Right ventricle myocardium superior (tissue), 1 donor: ENCODE measurements at regions of chr4 and their contacts with region 1.

Region 1: GRCh38 chr4:138182838-138183426 is 59.2 kb downstream of the SLC7A11 start:
- DNase-seq: no peak
- ATAC-seq: peak; percentile 69

Region 2: DNA sequence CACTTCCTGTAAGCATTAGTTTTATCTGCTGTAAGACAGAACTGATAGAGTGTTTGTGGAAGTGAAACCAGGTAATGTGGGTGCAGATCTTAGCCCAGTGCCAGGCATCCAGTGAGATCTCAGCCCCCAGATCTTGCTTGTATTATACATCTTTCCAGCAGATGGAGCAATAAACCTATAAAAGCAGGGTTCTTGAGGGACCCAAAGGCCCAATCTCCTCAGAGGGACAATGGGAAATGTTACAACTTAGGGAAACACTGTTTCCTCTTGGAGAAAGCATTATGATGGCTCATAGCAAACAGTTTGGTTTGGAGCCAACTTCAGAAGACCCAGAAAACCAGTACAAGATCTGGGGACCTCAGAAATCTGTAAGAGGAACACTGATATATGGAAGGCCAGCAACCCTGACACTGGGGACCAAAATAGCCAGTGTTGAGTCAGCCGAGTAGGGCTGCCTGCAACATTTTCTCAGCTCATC is 147.1 kb before region 1 on chr4:
- intact Hi-C with region 1: loop called (anchors 5 kb)
- DNase-seq: no peak
- ATAC-seq: peak; percentile 95

Region 3: DNA sequence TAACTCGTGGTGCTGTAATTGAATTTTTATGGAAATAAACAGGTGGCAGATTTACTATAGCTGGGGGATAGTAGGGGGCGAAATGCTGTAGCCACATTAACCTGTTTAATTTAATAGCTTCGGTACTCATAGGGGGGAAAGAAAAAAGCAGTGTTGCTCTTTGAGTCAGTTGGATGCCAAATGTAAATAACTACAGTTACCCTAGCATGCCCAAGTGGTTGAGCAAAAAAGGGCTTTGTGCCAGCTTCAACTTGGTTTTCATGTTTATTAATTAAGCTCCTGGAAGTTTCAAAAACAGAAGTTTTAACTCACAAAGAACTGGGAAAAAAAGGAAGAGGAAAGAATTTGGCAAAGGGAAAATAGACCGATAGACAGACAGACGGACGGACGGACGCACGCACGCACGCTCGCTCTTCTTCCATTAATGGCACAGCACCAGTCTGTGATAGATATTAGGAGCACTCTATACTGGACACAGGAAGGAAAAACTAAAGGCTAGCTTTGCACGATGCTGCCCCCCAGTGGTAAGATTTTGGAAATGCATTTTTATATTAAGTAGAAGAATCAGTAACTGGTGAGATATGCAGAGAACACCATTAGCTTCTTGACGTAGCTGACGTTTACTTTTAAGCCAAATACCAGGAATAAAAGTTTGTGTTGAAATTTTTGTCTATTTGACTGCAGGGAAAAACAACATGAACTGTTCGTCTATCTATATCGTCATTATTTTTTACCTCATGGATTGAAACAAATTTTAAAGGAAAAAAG is 92.6 kb before region 1 on chr4:
- intact Hi-C with region 1: loop called (anchors 5 kb)
- DNase-seq: peak; percentile 46
- ATAC-seq: peak; percentile 84

Region 4: DNA sequence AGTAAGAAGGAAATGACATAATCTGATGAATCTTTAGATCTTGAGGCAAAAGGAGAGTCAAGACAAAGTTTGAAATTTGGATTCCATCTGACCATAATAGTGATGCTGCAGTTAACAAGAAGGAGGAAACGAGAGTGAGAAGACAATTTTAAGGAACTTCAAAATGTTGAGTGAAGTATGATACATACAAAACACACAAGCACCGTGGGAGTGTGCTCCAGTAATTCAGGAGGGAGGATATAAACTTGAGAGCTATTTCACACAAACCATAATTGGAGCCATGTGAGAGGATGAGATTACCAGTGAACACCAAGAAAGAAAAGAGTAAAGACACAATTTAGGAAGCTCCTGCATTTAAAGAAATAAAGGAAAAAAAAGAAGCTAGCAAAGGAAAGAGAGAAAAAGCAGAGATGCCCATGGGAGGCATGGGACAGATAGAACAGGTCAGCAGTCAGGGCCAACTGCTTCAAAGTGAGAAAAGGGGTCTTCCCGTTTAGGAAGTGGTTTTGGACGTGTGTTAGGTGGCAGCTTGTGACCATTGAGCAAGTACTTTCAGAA is 209.9 kb after region 1 on chr4:
- intact Hi-C with region 1: loop called (anchors 10 kb)
- DNase-seq: no peak
- ATAC-seq: no peak

Region 5: DNA sequence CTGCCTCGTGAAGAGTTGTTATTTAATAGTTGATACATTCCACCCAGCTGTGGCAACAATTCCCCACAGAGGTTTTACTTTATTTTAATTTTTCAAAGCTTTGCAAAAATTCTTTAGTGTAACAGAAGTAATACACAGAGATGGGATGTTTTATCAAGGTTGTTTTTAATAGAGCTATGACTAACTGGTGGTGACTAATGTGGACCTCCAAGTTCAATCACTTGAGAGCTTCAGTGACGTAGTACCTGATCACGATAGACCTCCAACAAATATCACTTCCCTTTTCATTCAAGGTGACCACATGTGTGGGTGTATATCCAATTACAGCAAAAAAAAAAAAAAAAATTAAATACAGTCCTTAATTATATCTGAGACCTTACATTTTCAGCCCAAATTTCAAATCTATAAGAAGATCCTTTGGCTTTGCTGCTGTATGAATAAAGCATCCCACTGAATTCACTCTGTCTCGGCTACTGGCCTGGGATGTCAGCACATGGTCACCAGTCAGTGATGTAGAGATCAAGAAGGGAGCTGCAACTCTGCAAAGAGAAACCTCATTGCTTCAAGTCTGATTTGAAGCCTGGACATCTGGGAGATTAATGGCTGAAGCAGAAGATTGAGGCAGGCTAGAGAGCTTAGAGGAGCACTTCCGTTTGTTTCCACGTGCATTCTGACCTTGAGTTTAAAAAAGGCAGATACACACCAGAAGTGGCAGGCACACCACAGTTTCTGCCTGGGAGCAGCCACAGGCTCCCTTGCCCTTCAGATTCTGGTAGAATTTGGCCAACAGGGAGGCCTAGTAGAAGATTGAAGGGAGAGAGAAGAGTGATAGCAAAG is 486.8 kb after region 1 on chr4:
- intact Hi-C with region 1: loop called (anchors 10 kb)
- DNase-seq: no peak
- ATAC-seq: no peak